SK-N-SH (cell line): ENCODE measurements at regions of chr12 and their contacts with region 1.

Region 1: GRCh38 chr12:52004042-52004648 is 2.6 kb upstream of the TAMALIN start:
- DNase-seq: peak; percentile 67
- H3K4me3 ChIP-seq: no peak overlapping the region
- H3K27ac ChIP-seq: no peak overlapping the region
- H3K4me1 ChIP-seq: peaks cover 0 to 15% of the 10 kb centered on the region in 2 experiments; a peak in 1 of 4 replicates
- H3K27me3 ChIP-seq: no peaks in the 10 kb centered on the region
- CTCF ChIP-seq: peak; percentile 73
- EP300 ChIP-seq: no peak
- RAD21 ChIP-seq: peak; percentile 79

Region 2: DNA sequence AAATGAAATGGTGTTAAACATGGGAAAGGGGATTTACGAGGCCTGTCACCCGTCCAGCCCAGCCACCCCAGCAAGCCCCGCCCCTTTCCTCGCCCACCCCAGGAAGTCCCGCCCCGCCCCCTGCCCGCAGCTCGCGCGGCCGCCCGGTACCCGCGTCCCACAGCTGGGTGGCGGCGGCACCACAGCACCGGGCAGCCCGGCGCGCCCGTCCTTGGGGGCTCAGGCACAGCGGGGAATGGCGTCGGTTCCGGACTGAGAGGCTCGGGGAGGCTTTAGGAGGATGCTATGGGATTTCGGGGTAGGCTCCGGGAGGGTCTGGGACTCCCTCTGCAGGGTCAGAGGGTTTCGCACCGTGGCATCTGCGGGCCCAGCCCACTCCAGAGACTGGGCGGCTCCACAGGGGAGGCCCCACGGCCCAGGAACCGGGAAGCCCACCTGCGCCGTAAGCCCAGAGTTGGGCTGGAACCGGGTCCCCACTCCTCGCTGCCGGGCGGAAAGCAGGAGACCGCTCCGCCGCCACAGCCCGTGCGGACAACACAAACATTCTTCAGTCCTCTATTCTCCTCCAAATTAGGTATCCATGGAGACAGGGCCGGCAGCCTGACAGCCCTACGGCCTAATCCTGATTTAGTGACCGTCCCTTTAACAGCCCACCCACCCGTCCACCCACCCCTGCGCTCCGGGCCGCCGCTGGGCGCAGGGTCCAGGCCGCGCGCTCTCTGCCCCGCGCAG is 157.1 kb before region 1 on chr12:
- CTCF ChIA-PET with region 1: no interaction called
- POLR2A ChIA-PET with region 1: no interaction called
- DNase-seq: peak; percentile 94
- H3K4me3 ChIP-seq: peak overlapping the region; percentile 61 to 63
- H3K27ac ChIP-seq: peak overlapping the region in 1 of 2 experiments; percentile 90; a peak in 2 of 4 replicates
- H3K4me1 ChIP-seq: peaks cover 0 to 42% of the 10 kb centered on the region in 2 experiments; a peak in 2 of 4 replicates
- H3K27me3 ChIP-seq: peaks cover 12% of the 10 kb centered on the region; the same call in 1 of the 2 replicates
- CTCF ChIP-seq: no peak
- EP300 ChIP-seq: no peak
- RAD21 ChIP-seq: no peak

Region 3: GRCh38 chr12:52032804-52033502 is 28.8 kb after region 1 on chr12:
- CTCF ChIA-PET with region 1: interaction called, 608 read pairs
- POLR2A ChIA-PET with region 1: interaction called, 4 read pairs
- DNase-seq: peak; percentile 96
- H3K4me3 ChIP-seq: peak overlapping the region; percentile 46 to 53
- H3K27ac ChIP-seq: peak overlapping the region; percentile 82 to 94
- H3K4me1 ChIP-seq: peaks cover 0 to 27% of the 10 kb centered on the region in 2 experiments; a peak in 2 of 4 replicates
- H3K27me3 ChIP-seq: no peaks in the 10 kb centered on the region
- CTCF ChIP-seq: no peak
- EP300 ChIP-seq: no peak
- RAD21 ChIP-seq: no peak

Region 4: GRCh38 chr12:52121824-52122539 is 117.8 kb after region 1 on chr12:
- CTCF ChIA-PET with region 1: interaction called, 11 read pairs
- POLR2A ChIA-PET with region 1: no interaction called
- DNase-seq: peak; percentile 87
- H3K4me3 ChIP-seq: no peak overlapping the region
- H3K27ac ChIP-seq: no peak overlapping the region
- H3K4me1 ChIP-seq: peaks cover 0 to 26% of the 10 kb centered on the region in 2 experiments; a peak in 1 of 4 replicates
- H3K27me3 ChIP-seq: peaks cover 4% of the 10 kb centered on the region; the same call in 1 of the 2 replicates
- CTCF ChIP-seq: peak; percentile 77
- EP300 ChIP-seq: peak in 1 of 2 experiments; percentile 9; a peak in 1 of 4 replicates
- RAD21 ChIP-seq: peak; percentile 78

Region 5: DNA sequence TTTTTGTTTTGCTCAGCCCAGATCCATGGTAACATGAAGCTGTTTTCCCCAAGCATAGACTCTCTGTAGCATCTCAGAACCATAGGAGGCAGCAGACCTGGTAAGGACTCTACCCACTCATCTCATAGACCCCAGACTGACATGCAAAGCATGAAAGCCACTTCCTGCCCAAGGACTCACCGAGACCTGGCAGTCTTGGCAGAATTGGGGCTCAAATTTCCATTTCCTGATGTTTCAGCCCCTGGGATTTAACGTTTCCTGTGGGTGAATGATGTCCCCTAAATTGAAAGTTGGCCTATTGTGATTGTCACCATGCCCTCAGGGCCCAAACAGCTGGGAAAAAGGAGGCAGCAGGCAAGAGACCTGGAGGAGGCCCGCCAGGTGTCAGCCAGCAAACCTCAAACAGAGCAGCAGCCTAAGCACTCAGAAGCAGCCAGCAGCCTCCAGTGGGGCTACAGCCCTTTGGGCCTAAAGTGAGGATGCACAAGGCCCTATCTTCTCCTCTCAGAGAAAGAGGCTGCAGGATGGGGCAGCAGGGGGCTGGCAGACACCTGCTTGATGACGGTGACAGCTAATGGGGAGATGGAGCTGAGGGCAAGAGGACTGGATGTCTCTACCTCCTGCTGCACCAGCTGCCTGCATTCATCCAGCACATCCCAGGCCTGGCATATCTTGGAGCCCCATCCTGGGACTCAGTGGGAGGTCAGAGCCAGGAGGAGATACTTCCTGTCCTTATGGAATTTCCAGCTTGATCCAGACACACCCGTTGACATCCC is 354.6 kb after region 1 on chr12:
- CTCF ChIA-PET with region 1: no interaction called
- POLR2A ChIA-PET with region 1: no interaction called
- DNase-seq: no peak
- H3K4me3 ChIP-seq: no peak overlapping the region
- H3K27ac ChIP-seq: no peak overlapping the region
- H3K4me1 ChIP-seq: no peaks in the 10 kb centered on the region; a peak in 1 of 4 replicates
- H3K27me3 ChIP-seq: peaks cover 22% of the 10 kb centered on the region; the same call in 1 of the 2 replicates
- CTCF ChIP-seq: no peak
- EP300 ChIP-seq: no peak
- RAD21 ChIP-seq: no peak